ENCODE measurements at regions of chr12 and their contacts with region 1.

Region 1: DNA sequence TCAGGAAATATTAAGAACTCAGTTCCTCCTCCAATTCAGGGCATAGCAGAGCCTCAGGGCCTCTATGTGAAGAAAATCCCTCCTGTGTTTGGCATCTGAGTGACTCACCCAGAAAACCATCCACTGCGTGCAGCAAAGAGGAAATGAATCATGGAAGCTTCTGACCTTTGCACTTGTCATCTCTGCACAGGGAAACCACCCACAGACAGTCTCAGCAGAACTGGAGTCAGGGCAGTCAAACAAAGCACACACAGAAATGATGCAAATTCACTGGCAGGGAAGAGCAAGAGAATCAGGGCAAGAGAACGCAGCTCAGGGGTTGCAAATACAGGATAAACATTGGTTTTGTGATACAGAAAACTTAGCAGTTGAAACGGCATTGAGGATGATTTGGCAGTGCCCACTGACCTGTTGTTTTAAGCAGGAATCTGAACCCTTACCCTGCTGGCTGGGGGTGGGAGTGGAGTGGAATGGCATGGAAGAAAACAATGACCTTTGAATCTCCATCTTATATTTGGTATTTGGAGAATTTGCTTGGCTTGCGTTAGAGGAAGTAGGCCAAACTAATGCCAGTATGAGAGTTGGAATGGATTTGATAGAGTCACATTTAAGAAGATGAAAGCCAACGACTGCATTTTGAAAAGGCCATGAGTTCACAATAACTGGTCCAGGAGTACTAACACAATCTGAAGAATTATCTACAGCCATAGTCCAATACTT is 53.5 kb downstream of the PHLDA1 start:
- DNase-seq: peak; percentile 90
- H3K4me3 Mint-ChIP-seq: peak overlapping the region; percentile 57
- H3K27ac Mint-ChIP-seq: peak overlapping the region; percentile 99
- H3K4me1 Mint-ChIP-seq: peaks cover 60% of the 10 kb centered on the region
- H3K27me3 Mint-ChIP-seq: no peaks in the 10 kb centered on the region

Region 2: DNA sequence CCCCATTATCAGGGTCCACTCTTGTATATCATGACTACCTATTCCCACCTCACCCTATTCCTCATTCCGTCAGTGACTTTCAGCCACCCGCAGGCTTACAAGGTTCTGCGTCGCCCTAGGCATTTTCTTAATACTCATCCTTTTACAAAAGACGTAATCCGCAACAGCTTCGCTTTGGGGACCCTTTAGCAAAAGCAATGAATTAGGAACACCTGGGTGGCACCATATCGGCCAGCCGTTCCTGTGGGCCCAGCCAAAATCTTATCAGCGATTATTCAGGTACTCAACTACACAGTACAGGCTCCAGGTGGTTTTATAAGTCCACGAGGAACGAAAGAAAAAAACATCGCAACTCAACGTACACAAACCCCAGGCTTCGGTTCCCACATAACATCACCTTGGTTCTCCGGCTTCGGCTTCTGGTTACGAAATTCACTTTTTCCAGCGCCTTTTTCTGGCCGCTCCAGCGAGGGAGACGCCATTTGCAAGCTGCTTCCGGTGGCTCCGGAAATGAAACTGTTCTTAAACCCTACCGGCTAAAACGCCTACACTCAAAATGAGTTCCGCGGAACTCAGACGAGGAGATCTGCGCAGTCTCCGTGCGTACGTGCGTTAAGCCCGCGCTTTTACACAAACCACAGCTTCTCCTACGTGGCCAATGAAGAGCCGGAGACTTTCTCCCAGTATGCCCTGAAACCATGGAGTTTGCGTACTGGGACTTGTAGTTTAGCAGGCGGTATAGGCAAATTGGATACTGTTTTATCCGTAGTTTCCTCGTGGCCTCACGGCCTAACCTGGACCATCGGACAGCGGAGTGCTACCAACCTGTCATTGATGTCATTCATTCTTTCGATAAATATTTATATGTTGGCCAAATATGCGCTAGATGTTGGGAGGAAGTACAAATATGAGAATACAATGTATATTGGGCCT is 466.7 kb before region 1 on chr12 and contains the start of gene KRR1:
- CTCF ChIA-PET with region 1: no interaction called
- intact Hi-C with region 1: loop called (anchors 1 kb)
- DNase-seq: peak; percentile 95
- H3K4me3 Mint-ChIP-seq: peak within 1 kb of the TSS; percentile 95
- H3K27ac Mint-ChIP-seq: peak within 1 kb of the TSS; percentile 98
- H3K4me1 Mint-ChIP-seq: peaks cover 29% of the 10 kb centered on the region
- H3K27me3 Mint-ChIP-seq: no peaks in the 10 kb centered on the region
- total RNA-seq, gene KRR1: 81.1 to 83.9 TPM

Region 3: GRCh38 chr12:75790219-75790618 is 187.9 kb before region 1 on chr12:
- CTCF ChIA-PET with region 1: no interaction called
- intact Hi-C with region 1: loop called (anchors 1 kb)
- DNase-seq: no peak
- H3K4me3 Mint-ChIP-seq: no peak overlapping the region
- H3K27ac Mint-ChIP-seq: no peak overlapping the region
- H3K4me1 Mint-ChIP-seq: peaks cover 22% of the 10 kb centered on the region
- H3K27me3 Mint-ChIP-seq: peaks cover 10% of the 10 kb centered on the region

Region 4: DNA sequence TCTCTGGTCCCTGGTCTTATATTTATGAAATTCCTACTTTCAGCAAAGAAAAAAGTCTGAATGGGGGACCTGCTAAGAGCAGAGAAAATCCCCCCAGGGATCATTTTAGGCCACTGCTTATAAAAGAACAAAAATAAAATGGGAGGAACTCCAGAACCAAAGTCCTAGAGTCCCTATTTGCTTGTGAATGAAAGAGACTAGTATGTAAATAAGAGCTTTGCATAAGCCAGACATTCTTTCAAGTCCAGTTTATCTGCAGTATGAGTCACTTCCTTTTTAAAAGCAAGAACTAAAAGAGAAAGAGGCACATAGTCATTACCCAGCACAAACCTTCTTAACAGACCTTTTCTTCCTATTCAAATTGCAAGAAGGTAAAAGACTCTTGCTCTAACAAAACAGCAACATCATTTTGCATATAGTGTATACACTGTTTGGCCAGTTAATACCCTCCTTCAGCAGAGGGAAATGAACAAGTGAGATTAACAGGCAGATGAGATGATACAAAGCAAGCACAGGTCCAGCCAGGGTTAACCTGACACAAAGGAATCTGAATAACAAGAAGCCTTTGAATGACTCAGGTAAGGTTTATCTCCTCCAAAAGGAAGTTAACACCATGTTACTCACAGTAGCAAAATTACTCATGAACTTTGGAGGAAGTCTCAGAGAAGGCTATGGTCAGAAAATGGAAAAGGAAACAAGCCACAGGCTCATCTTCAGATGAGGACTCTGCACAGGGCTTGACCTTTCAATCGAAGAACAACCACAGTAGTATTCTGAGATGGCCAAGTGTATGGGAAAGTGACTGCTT is 33.8 kb before region 1 on chr12:
- CTCF ChIA-PET with region 1: interaction called, 5 read pairs
- intact Hi-C with region 1: loop called (anchors 1 kb)
- DNase-seq: peak; percentile 44
- H3K4me3 Mint-ChIP-seq: no peak overlapping the region
- H3K27ac Mint-ChIP-seq: peak overlapping the region; percentile 87
- H3K4me1 Mint-ChIP-seq: peaks cover 22% of the 10 kb centered on the region
- H3K27me3 Mint-ChIP-seq: no peaks in the 10 kb centered on the region

Region 5: GRCh38 chr12:76006028-76006925 is 28.2 kb after region 1 on chr12:
- CTCF ChIA-PET with region 1: no interaction called
- intact Hi-C with region 1: no loop called
- DNase-seq: no peak
- H3K4me3 Mint-ChIP-seq: no peak overlapping the region
- H3K27ac Mint-ChIP-seq: no peak overlapping the region
- H3K4me1 Mint-ChIP-seq: no peaks in the 10 kb centered on the region
- H3K27me3 Mint-ChIP-seq: no peaks in the 10 kb centered on the region

Region 6: DNA sequence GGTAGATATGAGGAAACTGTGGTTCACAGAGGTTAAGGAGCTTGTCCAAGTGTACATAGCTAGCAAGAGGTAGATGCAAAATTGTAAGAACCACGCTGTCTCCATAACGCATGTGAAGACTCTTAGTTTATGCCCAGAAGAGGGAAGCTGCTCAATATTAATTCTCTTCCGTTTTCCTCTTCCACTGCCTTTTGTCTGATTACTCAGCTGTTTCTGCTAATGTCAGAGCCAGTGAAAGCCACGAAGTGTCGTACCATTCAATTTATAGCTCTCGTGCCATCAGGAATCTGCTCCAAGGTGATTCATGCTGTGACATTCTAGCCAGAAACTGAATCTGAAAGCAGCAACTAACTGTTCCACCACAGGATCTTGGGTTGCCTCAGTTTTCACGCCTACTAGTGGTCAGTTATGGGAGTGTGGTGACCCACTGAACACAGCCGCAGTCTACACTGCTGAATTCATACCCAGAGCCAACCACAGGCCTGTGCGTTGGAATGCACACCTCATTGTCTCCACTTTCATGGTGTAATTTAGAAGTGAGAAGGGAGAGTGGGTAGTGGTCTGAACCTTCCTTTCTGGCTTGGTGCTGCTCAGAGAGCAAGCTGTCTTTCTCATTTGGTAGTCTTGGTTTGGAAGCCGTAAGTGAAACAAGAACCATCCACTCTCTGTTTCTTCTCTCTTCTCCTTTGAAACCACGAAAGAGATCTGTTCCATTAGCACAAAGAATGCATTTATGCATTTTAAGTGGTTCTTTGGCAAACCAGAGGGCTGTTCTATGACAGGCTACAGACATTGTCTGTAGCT is 180.6 kb after region 1 on chr12:
- CTCF ChIA-PET with region 1: no interaction called
- intact Hi-C with region 1: no loop called
- DNase-seq: peak; percentile 73
- H3K4me3 Mint-ChIP-seq: no peak overlapping the region
- H3K27ac Mint-ChIP-seq: no peak overlapping the region
- H3K4me1 Mint-ChIP-seq: peaks cover 10% of the 10 kb centered on the region
- H3K27me3 Mint-ChIP-seq: no peaks in the 10 kb centered on the region

Region 7: DNA sequence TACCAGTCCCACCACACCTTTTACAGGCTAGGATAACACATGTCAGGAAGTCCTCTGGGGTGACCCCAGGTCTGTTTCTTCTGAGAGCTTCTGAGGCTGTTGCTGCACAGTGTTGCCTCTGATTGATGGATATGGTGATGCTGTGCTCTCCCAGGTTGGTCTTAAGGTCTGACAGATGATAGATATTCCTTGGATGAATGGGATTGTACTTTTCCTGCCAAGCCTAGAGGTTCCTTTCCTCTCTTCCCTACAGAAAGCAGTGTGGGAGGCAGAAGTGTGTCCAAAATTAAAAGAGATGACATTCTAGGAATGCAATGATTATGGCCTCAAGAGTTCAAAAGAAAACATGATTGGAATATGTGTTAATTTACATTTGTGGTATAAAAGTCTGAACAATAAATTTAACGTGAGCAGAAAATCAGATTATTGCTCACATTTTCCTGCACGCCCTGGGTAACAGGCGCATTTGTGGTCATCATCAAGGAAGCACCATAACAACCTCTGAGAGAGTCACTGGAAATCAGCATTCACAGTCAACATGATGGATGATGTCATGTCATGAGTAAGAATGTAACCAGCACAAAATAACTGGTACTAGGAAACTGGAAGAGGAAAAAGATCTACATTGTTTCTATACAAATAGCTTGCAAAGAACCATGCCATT is 296.4 kb after region 1 on chr12:
- CTCF ChIA-PET with region 1: no interaction called
- intact Hi-C with region 1: loop called (anchors 2 kb)
- DNase-seq: peak; percentile 58
- H3K4me3 Mint-ChIP-seq: no peak overlapping the region
- H3K27ac Mint-ChIP-seq: peak overlapping the region; percentile 10
- H3K4me1 Mint-ChIP-seq: peaks cover 12% of the 10 kb centered on the region
- H3K27me3 Mint-ChIP-seq: peaks cover 11% of the 10 kb centered on the region

Measured in activated naive CD4-positive, alpha-beta T cell treated with anti-CD3 and anti-CD28 coated beads for 36 hours (primary cell).